WTC11 (cell line): ENCODE measurements at regions of chr16 and their contacts with region 1.

Region 1: GRCh38 chr16:86343027-86343787 is 167.1 kb upstream of the FOXF1 start:
- DNase-seq: no peak
- ATAC-seq: no peak
- H3K4me3 Mint-ChIP-seq: no peak overlapping the region
- H3K27ac Mint-ChIP-seq: no peak overlapping the region
- H3K4me1 Mint-ChIP-seq: peaks cover 55% of the 10 kb centered on the region
- H3K27me3 Mint-ChIP-seq: peaks cover 46% of the 10 kb centered on the region
- CTCF ChIP-seq: no peak

Region 2: GRCh38 chr16:86354645-86355044 is 11.4 kb after region 1 on chr16:
- CTCF ChIA-PET with region 1: interaction called, 16 read pairs
- POLR2A ChIA-PET with region 1: no interaction called
- DNase-seq: no peak
- ATAC-seq: no peak
- H3K4me3 Mint-ChIP-seq: no peak overlapping the region
- H3K27ac Mint-ChIP-seq: no peak overlapping the region
- H3K4me1 Mint-ChIP-seq: peaks cover 66% of the 10 kb centered on the region
- H3K27me3 Mint-ChIP-seq: peaks cover 12% of the 10 kb centered on the region
- CTCF ChIP-seq: no peak

Region 3: DNA sequence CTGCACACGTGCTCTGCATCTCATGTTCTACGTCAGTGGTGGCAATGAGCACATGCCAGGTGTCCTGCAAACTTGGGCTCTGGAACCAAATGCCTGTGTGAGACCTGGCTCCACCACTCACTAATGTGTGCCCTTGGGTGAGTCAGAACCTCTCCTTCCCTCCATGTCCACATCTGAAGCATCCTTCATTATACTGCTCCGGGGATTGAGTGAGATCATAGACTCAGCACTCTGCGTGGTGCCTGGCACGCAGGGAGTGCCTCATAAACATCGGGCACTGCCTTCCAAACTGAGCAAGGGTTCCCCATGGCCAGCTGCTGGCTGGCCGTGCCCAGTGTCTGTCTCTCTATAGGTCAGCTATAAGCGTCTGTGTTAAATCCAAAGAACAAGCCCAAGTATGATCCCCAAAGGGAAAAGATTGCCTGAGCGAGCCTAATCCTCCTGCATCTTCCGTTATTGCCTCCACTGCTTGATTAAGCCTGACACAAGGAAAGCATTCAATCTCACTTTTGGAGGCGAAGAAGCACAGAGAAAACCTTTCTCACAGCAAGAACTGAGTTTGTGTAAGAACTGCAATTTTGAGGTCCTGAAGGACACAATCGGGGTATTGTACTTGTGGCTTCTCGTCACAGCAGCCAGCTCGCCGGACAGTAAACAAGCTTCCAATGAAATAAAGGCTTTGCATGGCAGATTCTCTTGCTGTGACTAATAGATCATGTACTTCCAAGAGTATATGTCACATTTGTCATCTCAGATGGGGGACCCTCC is 148.2 kb after region 1 on chr16:
- CTCF ChIA-PET with region 1: interaction called, 12 read pairs
- POLR2A ChIA-PET with region 1: no interaction called
- DNase-seq: no peak
- ATAC-seq: no peak
- H3K4me3 Mint-ChIP-seq: no peak overlapping the region
- H3K27ac Mint-ChIP-seq: no peak overlapping the region
- H3K4me1 Mint-ChIP-seq: peaks cover 18% of the 10 kb centered on the region
- H3K27me3 Mint-ChIP-seq: peaks cover 87% of the 10 kb centered on the region
- CTCF ChIP-seq: no peak